ENCODE measurements at regions of chr13 and their contacts with region 1.

Region 1: DNA sequence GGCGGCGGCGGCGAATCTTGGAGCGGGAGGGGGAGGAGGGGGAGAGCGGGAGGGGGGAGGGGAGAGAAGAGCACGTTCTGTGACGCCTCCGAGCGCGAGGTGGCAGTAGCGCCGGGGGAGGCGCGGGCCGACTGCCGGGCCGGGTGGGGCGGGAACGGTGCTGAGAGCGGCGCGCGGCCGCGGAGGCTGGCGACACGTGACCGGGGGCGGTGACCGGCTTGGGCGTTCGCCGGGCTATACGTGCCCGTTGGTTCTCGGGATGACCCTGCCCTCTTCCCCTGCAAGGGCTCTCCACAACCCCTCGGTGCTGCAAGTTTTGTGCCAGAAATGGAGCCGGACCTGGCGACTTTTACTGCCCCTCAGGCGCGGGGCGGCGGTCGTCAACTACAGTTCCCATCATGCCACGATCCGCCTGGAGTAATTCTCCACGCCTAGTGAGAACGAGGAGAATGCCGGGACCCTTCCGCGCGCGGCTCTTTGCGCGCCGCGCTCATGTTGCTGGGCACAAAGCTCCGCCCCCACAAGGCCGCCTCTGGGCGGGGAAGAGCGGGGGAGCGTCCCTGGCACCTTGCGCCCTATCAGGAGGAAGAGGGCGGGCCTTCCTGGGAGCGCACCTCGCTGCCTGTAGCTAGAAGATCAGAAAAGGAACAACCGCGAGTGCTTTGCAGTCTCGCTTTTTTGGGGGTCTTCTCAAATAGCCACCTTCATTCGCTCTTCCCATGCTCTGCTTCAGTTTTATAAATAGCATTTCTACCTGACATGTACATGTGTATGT is at the start of gene KPNA3:
- H3K4me3 Mint-ChIP-seq: peak within 1 kb of the TSS; percentile 87
- H3K27ac Mint-ChIP-seq: peak within 1 kb of the TSS; percentile 93
- H3K4me1 Mint-ChIP-seq: peaks cover 27% of the 10 kb centered on the region
- H3K27me3 Mint-ChIP-seq: no peaks in the 10 kb centered on the region

Region 2: GRCh38 chr13:49300739-49301589 is 491.8 kb before region 1 on chr13:
- intact Hi-C with region 1: no loop called
- H3K4me3 Mint-ChIP-seq: peak overlapping the region; percentile 72
- H3K27ac Mint-ChIP-seq: peak overlapping the region; percentile 67
- H3K4me1 Mint-ChIP-seq: peaks cover 13% of the 10 kb centered on the region
- H3K27me3 Mint-ChIP-seq: no peaks in the 10 kb centered on the region

Region 3: GRCh38 chr13:49421391-49421790 is 371.3 kb before region 1 on chr13:
- intact Hi-C with region 1: no loop called
- H3K4me3 Mint-ChIP-seq: no peak overlapping the region
- H3K27ac Mint-ChIP-seq: no peak overlapping the region
- H3K4me1 Mint-ChIP-seq: peaks cover 22% of the 10 kb centered on the region
- H3K27me3 Mint-ChIP-seq: no peaks in the 10 kb centered on the region

Region 4: GRCh38 chr13:49620170-49620621 is 172.5 kb before region 1 on chr13:
- intact Hi-C with region 1: no loop called
- H3K4me3 Mint-ChIP-seq: no peak overlapping the region
- H3K27ac Mint-ChIP-seq: no peak overlapping the region
- H3K4me1 Mint-ChIP-seq: peaks cover 7% of the 10 kb centered on the region
- H3K27me3 Mint-ChIP-seq: no peaks in the 10 kb centered on the region

Region 5: DNA sequence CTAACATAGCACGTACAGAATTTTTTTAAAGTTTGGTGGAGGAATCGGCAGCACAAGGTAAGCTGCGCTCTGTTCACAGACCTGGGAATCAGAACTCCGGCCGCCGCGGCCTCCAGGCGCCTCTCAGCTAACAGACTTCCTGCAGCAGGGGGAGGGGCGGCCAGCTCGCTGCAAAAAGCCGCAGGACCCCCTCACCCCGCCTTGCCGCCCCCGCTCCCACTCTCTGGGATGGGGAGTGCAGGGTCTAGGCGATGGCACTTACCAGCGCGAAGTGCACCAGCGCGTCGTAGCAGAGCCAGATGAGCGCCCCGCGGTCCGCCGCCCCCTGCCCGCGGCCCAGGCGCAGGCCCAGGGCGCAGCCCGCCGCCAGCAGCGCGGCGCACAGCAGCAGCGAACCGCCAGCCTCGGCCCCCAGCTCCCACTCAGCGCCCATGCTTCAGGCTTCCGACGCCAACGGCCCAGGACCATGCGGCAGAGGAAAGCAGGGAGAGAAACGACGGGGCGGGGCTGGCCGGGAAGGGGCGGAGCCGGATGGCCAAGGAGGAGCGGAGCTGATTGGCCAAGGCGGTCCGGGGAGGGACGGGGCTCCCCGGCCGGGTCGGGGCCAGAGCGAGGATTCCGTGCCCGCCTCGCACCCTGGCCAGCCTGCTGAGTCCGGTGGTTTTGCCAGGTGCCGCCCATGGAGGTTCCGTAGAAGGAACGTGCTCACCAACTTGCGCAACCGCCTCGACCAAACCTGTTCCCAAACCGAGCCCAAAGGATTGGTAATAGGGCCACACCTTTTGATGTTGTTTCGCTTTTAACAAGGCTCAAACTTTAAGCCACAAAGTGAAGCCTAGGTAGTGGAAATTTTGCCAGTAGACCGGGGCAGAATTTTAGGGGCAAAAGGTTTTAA is 101.5 kb before region 1 on chr13 and contains the start of gene EBPL:
- intact Hi-C with region 1: loop called (anchors 5 kb)
- H3K4me3 Mint-ChIP-seq: peak within 1 kb of the TSS; percentile 79
- H3K27ac Mint-ChIP-seq: peak within 1 kb of the TSS; percentile 56
- H3K4me1 Mint-ChIP-seq: peaks cover 35% of the 10 kb centered on the region
- H3K27me3 Mint-ChIP-seq: peaks cover 1% of the 10 kb centered on the region

Region 6: DNA sequence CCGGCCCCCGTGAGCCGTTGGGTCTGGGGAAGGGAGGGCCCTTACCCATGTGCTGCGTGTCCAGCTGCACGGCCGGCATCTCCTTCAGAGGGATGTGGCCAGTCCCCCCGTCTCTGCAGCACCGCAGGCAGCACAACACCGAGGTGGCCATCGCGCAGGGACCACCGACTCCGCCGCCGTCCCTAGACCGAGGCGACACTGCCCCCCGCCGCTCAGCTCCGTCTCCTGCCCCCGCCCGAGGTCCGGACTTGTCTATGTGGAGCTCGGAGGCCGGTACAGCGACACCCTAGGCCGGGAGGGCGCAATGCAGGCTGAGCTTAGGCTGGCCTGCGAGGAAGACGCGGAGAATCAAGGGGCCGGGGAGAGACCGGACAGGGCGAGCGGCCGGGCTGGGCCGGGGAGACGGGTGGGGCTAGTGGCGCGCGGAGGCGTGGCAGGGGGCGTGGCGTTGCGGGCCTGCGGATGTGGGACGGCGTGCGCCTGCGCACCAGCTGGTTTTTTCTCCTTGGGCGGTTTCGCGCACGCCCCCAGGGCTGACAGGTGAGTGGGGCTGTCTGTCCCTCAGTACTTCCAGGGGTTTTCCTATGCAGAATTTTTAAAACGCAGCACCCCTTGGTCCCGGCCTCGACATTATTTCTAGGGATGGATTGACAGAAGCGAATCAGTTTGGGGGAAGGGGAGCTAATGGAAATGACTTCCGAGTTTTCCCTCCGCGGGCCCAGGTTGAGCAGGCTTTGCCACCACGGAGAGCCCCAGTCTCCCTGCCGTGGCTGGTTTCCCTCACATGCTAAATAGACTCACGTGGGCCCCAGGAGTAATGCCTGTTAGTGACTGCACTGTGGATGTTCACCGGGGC is 143.6 kb after region 1 on chr13 and contains the start of gene SPRYD7:
- intact Hi-C with region 1: loop called (anchors 1 kb)
- H3K4me3 Mint-ChIP-seq: peak within 1 kb of the TSS; percentile 78
- H3K27ac Mint-ChIP-seq: peak within 1 kb of the TSS; percentile 79
- H3K4me1 Mint-ChIP-seq: peaks cover 22% of the 10 kb centered on the region
- H3K27me3 Mint-ChIP-seq: no peaks in the 10 kb centered on the region